Transverse colon (tissue), 4 donors: ENCODE measurements at regions of chrX and their contacts with region 1.

Region 1: DNA sequence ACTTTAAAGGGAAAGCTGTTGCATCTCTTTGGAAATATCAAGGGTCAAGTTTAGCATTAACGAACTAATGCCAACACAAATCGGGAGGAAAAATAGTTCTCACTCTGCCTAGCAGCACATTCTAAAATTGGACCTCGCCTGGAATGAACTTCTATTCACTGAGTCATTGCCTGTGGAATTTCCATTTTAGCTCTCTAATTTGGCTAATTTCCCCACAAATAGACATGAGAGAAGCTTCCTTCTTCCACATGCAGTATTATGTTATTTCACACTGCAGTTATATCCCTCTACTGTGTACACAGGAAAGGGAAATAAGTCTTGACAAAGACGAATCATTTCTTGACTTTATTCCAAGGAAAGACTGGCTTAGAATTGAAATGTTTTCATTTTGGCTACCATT is 9.3 kb downstream of the ZXDA start:
- DNase-seq: no peak
- H3K4me3 ChIP-seq: no peak overlapping the region
- H3K27ac ChIP-seq: peak overlapping the region in 3 of 4 donors; percentile 8 to 40 (median 27)
- H3K4me1 ChIP-seq: no peaks in the 10 kb centered on the region
- H3K27me3 ChIP-seq: no peaks in the 10 kb centered on the region
- CTCF ChIP-seq: no peak
- EP300 ChIP-seq: no peak
- POLR2A ChIP-seq: no peak

Region 2: GRCh38 chrX:56219700-56220099 is 1681.3 kb before region 1 on chrX:
- in situ Hi-C with region 1: no loop called
- intact Hi-C with region 1: loop called (anchors 5 kb)
- DNase-seq: no peak
- H3K4me3 ChIP-seq: no peak overlapping the region
- H3K27ac ChIP-seq: no peak overlapping the region
- H3K4me1 ChIP-seq: no peaks in the 10 kb centered on the region
- H3K27me3 ChIP-seq: no peaks in the 10 kb centered on the region
- CTCF ChIP-seq: peak in 4 of 5 experiments; percentile 16 to 33 (median 30)
- EP300 ChIP-seq: no peak
- POLR2A ChIP-seq: no peak